Left cardiac atrium (tissue), 4 donors: ENCODE measurements at regions of chr10 and their contacts with region 1.

Region 1: GRCh38 chr10:17257466-17258321 is 29.7 kb downstream of the VIM start:
- DNase-seq: peak; percentile 28
- ATAC-seq: peak; percentile 86 to 90

Region 2: DNA sequence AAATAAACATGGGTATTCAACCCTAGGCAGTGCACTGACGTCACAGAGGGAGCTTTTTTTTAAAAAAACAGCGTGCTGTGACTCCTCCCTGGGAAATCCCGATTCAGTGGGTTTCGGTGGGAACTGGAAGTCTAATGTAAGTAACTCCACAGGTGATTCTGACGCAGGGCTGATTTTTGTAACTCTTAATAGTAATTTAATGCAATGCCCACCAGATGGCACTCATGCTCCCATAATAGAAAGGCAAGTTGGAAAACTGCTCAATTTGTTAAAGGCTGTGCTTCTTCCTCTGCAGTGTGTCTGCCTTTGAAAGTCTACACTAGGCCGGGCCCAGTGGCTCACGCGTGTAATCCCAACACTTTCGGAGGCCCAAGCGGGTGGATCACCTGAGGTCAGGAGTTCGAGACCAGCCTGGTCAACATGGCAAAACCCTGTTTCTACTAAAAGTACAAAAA is 429.6 kb before region 1 on chr10:
- intact Hi-C with region 1: loop called in 1 of 2 experiments (anchors 2 kb)
- DNase-seq: peak; percentile 47
- ATAC-seq: peak; percentile 85 to 87

Region 3: GRCh38 chr10:16843252-16843870 is 414.3 kb before region 1 on chr10:
- intact Hi-C with region 1: loop called (anchors 1 to 5 kb)
- DNase-seq: no peak
- ATAC-seq: peak; percentile 72 to 73